Activated CD8-positive, alpha-beta T cell treated with anti-CD3 and anti-CD28 coated beads, Interleukin-2, amount 10 ng/mL, durations not matched to agents 7 days and 5 days (primary cell): ENCODE measurements at regions of chr9 and their contacts with region 1.

Region 1: DNA sequence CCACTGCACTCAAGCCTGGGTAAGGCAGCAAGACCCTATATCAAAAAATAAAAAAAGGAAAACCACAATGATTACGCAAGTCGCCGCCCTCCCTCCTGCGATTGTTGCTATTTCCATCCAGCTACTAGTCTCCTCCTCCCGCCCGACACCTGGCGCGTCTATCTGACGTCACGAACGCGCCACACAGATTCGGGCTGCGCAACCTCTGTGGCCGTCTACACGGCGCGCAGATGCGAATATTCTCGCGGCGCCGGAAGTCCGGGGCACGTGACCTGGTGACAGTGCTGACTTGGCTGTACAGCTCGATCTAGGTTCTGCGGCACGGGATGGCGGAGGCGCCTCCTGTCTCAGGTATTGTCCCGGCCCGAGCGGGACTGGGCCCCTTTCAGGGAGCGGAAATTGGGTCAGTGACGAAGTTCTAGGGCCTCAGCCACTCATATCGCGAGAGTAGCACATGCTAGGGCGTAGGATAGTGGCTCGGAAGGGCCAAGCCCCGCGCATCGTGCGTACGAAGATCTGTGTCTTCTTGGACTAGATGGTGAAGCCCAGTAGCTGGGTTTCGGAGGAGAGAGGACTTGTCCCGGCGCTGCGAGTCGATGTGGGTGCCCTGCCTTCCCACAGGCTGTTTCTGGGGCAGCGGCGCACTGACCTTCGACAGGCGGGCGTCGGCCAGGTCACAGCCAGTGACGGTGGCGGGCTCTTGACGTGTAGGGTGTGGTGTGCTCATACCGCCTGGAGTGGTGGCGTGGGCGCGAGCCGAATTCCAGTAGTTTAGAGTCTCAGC is at the start of gene NFX1:
- DNase-seq: peak; percentile 99
- ATAC-seq: peak; percentile 91
- H3K4me3 Mint-ChIP-seq: peak within 1 kb of the TSS; percentile 97
- H3K27ac Mint-ChIP-seq: peak within 1 kb of the TSS; percentile 100
- H3K4me1 Mint-ChIP-seq: peaks cover 65% of the 10 kb centered on the region
- H3K27me3 Mint-ChIP-seq: no peaks in the 10 kb centered on the region
- total RNA-seq, gene NFX1: 38.8 to 39.8 TPM

Region 2: DNA sequence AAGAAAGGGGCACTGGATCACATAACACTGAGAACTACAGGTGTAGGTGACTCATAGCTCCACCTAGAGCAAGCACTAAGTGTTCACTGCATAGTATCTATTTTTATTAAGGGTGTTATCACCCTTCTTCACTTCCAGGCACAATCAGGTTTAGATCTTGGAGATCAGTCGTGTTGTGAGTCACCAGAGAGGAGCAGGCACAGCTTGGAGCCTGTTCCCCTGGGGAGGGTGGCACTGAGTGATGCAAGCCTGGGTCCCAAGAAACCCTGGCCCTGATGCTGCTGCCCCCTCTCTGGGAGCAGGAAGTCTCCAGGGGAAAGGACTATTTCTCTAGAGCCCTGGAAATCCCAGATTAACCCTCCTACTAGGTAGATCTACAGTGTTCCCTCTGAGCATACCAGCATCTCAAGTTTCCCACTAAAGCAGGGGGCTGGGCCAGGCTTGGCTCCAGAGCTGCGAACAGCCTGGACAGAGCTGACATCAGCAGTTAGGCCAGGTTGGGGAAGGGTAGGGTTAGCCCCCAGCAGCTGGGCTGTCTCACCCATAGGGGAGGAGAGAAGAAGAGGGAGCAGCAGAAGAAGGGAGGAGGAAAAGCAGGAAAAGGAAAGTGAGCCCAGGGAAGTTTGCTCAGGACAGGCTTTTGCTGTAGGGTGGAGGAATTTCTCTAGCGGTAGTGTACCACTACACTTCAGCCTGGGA is 78.6 kb before region 1 on chr9:
- CTCF ChIA-PET with region 1: no interaction called
- POLR2A ChIA-PET with region 1: no interaction called
- DNase-seq: no peak
- ATAC-seq: no peak
- H3K4me3 Mint-ChIP-seq: no peak overlapping the region
- H3K27ac Mint-ChIP-seq: no peak overlapping the region
- H3K4me1 Mint-ChIP-seq: no peaks in the 10 kb centered on the region
- H3K27me3 Mint-ChIP-seq: peaks cover 18% of the 10 kb centered on the region

Region 3: DNA sequence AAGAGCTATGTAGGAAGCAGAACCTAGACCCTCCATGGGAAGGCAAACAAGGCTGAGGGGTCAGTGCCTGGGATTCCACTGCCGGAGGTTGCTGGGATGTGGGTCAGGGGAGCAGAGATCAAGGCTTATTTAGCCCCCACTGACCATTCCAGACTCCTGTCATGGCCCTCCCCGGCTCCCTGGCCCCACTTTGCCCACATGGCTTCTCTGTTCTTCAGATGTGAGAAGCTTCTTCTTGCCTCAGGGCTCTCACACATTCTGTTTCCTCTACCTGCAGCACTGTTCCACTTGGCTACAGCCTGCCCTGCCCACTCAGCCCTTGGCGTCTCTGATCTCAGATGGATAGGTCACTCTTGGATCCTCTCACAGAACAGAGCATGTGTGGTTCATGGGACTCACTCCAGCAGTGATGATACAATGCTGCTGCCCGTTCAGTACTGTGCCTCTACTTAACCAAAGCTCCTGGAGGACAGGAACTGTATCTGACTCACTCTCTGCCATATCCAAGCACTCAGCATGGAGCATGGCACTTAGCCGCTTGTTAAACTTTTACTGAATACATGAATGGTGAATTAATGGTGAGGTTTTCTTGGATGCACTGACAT is 54.0 kb before region 1 on chr9:
- CTCF ChIA-PET with region 1: no interaction called
- POLR2A ChIA-PET with region 1: no interaction called
- DNase-seq: no peak
- ATAC-seq: no peak
- H3K4me3 Mint-ChIP-seq: no peak overlapping the region
- H3K27ac Mint-ChIP-seq: no peak overlapping the region
- H3K4me1 Mint-ChIP-seq: peaks cover 4% of the 10 kb centered on the region
- H3K27me3 Mint-ChIP-seq: peaks cover 10% of the 10 kb centered on the region

Region 4: DNA sequence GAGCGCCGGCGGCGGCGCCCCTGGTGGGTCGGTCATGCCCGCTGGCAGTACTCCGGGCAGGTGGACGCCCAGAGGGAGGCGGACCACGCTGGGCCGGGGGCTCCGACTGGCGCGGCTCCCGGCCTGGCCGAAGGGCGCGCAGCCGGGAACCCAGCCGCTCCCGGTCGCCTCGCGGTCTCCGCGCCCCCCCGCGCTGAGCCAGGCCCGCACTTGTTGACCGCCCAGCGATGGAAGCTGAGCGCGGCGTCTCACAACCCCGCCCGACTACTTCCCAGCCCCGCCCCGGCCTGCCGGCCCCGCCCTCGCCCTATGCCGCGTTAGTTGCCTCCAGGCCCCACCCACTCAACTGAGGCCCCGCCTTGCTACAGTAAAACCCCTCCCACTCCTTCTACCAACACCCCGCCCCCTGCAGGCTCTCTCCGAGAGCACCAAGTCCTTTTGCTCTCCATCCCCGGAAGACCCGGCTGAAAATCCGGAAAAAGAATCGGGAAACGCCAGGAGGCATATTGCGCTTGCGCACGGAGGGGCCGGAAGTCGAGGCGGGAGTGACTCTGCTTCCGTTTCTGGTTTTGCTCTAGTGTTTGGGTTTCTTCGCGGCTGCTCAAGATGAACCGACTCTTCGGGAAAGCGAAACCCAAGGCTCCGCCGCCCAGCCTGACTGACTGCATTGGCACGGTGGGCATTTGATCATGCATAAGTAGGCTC is 25.8 kb before region 1 on chr9 and contains the starts of genes BAG1 and CHMP5:
- CTCF ChIA-PET with region 1: interaction called, 11 read pairs
- POLR2A ChIA-PET with region 1: interaction called, 22 read pairs
- DNase-seq: peak; percentile 100
- ATAC-seq: peak; percentile 90
- H3K4me3 Mint-ChIP-seq: peak within 1 kb of the TSS; percentile 99
- H3K27ac Mint-ChIP-seq: peak within 1 kb of the TSS; percentile 100
- H3K4me1 Mint-ChIP-seq: peaks cover 52% of the 10 kb centered on the region
- H3K27me3 Mint-ChIP-seq: no peaks in the 10 kb centered on the region
- total RNA-seq, gene BAG1: 95.5 to 96.3 TPM
- total RNA-seq, gene CHMP5: 83.0 to 85.5 TPM

Region 5: GRCh38 chr9:33344145-33344544 is 53.7 kb after region 1 on chr9:
- CTCF ChIA-PET with region 1: no interaction called
- POLR2A ChIA-PET with region 1: no interaction called
- DNase-seq: no peak
- ATAC-seq: no peak
- H3K4me3 Mint-ChIP-seq: no peak overlapping the region
- H3K27ac Mint-ChIP-seq: peak overlapping the region; percentile 6
- H3K4me1 Mint-ChIP-seq: peaks cover 14% of the 10 kb centered on the region
- H3K27me3 Mint-ChIP-seq: no peaks in the 10 kb centered on the region

Region 6: GRCh38 chr9:33364127-33364526 is 73.7 kb after region 1 on chr9:
- CTCF ChIA-PET with region 1: no interaction called
- POLR2A ChIA-PET with region 1: no interaction called
- DNase-seq: no peak
- ATAC-seq: no peak
- H3K4me3 Mint-ChIP-seq: no peak overlapping the region
- H3K27ac Mint-ChIP-seq: no peak overlapping the region
- H3K4me1 Mint-ChIP-seq: no peaks in the 10 kb centered on the region
- H3K27me3 Mint-ChIP-seq: no peaks in the 10 kb centered on the region

Region 7: DNA sequence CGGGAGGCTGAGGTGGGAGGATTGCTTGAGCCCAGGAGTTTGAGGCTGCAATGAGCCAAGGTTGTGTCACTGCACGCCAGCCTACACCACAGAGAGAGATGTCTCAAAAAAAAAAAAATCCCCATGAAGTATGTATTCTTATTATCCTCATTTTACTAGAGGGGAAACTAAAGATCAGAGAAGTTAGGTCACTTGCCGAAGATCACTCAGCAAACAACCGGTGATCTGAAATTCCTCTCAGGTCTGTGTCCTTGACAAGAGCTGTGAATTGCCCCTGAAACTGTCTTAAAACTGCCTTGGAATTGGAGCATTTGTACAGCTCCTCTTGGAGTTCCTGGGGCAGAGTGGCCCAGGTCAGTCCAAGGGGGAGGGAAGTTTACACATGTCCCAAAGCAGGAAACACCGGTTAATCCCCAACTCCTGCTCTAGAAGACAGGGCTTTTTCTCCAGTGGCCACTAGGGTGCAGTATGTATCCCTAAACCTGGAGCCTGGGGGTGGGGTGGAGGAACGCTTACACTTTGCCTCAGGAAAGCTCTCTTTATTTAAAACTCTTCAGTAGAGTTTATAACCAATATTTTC is 84.3 kb after region 1 on chr9:
- CTCF ChIA-PET with region 1: interaction called, 22 read pairs
- POLR2A ChIA-PET with region 1: no interaction called
- DNase-seq: peak; percentile 81
- ATAC-seq: peak; percentile 85
- H3K4me3 Mint-ChIP-seq: no peak overlapping the region
- H3K27ac Mint-ChIP-seq: peak overlapping the region; percentile 35
- H3K4me1 Mint-ChIP-seq: peaks cover 12% of the 10 kb centered on the region
- H3K27me3 Mint-ChIP-seq: no peaks in the 10 kb centered on the region

Region 8: DNA sequence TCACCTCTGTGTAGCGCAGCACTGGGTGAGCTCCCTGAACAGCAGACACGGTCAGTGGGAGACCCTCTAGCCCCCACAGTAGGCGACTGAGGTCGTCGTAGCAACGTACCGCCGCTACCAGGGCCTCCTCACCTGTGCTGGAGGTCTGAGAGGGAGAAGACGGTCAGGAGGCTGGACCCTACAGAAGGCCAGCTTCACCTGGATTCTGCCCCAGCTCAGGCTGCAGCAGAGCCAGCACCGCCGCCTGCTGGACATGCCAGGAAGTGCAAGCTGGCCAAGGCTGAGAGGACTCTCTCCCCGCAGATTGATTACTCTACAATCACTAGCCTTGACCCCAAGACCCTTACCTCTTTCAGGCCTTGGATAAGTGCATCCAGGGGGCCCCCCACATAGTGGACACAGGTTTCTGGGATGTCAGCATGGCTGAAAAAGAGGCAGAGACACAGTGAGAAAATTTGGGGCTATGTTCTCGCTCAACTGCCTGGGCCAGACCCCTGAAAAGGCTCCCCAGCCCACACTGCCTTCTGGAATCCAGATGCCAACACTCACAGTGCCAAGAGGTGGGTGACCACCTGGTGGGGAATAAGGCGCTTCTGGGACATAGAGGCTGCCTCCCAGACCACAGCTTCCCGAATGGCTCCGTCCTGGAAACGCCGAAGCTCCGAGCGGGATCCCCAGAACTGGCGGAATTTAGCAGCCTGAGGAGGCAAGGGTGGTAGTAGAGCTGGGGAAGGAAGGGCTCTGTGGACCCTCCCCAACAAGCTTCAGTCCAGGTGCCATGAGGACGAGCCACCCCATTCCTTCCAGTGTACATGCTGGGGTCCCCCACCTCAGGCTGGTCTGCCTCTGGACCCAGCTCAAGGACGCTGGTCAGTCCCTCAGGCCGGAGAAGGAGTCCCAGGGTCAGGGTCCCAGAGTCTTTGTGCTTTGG is 176.4 kb after region 1 on chr9:
- CTCF ChIA-PET with region 1: interaction called, 19 read pairs
- POLR2A ChIA-PET with region 1: interaction called, 14 read pairs
- DNase-seq: peak; percentile 79
- ATAC-seq: peak; percentile 71
- H3K4me3 Mint-ChIP-seq: no peak overlapping the region
- H3K27ac Mint-ChIP-seq: peak overlapping the region; percentile 25
- H3K4me1 Mint-ChIP-seq: peaks cover 7% of the 10 kb centered on the region
- H3K27me3 Mint-ChIP-seq: no peaks in the 10 kb centered on the region